AG04449 (cell line): ENCODE measurements at regions of chr9 and their contacts with region 1.

Region 1: DNA sequence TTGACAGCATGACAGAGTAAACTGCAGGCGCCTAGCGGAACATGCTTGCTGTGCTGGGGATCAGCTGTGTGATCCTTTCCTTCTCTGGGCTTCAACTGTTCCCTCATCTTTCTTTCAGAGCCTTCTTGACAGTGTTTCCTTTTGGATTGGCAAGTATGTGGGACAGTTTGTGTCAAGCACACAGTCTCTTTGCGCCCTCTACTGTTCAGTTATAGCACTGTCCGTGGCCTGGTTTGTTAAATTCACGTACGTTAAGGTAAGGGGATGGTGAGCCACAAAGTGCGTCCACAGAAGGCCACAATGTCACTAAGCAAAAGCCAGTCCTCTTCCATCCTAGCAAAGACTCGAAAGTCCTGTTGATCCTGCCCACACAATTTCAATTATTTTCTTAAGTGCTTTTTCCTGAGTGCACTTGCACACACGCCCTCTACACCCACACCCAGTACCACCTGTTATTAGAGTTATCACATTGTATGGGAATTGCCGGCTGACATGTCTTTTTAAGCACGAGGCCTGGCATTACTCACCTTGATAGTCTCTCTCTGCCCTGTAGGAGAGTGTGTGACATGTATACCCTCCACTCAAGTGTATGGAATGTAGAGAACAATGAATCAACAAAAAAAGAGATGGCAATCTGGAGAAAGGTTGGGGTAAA is 22.5 kb upstream of the PTPN3 start:
- DNase-seq: no peak
- H3K4me3 ChIP-seq: no peak overlapping the region
- CTCF ChIP-seq: peak; percentile 83

Region 2: GRCh38 chr9:109509611-109510010 is 11.0 kb before region 1 on chr9:
- CTCF ChIA-PET with region 1: interaction called, 13 read pairs
- POLR2A ChIA-PET with region 1: no interaction called
- DNase-seq: no peak
- H3K4me3 ChIP-seq: no peak overlapping the region
- CTCF ChIP-seq: no peak

Region 3: DNA sequence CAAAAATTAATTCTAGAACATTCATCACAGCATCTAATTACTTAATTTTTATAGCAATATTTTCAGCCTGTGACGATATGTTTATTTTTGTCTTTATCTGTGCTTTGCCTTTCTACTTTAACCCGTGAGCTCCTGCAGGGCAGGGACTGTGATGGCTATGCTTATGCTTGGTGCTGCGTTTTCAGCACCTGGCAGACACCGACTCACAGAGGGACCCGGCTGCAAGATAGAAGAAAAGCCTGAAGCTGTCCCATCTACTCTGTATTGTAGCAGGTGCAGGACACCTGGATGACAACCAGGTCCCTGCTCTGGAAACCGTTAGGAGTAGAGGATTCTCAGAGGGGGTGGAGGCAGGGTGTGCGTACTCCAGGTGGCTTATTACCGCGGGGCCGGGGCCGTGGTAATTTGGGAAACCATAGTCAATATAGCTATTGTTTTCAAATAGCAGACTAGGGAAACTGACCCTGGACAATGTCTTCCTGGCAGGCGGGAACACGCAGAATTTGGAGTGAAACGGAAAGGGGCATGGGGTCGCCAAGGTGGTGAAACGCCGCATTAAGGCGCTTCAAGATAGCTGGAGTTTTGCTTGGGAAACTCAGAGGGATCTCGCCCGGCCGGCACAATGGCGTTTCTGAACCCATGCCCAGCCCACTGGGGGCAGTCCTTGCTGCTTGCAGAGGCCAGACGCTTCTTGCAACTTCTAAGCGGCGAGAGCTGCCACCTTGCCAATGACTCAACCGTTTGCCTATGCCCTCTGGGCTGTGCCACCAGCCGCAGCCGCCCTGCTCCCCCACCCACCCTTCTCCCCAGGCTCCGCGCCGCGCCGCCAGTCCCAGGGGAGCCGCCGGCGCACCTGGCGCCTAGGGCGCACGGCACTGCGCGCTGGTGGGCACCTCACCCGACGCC is 119.3 kb after region 1 on chr9:
- CTCF ChIA-PET with region 1: no interaction called
- POLR2A ChIA-PET with region 1: no interaction called
- DNase-seq: no peak
- H3K4me3 ChIP-seq: peak overlapping the region; percentile 44
- CTCF ChIP-seq: no peak